ENCODE measurements at regions of chr17 and their contacts with region 1.

Region 1: DNA sequence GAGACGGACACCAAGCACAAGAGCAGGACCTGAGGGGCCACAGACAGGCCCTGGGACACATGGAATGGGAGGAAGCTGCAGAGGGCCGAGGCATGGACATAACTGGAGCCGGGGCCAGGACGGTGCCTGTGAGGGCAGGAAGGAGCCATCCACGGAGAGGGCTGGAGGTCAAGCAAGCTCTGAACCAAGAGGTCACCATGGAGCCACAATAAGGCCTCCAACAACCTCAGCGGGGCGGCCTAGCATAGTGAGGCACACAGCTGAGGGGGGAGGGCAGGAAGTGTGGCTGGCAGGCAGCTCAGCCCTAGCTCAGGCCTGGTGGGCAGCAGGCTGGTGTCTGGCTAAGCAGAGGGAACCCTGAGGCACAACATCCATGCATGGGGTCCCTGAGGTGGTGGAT is 4.4 kb downstream of the MCRIP1 start:
- DNase-seq: no peak
- H3K4me3 ChIP-seq: no peak overlapping the region
- H3K27ac ChIP-seq: no peak overlapping the region
- H3K4me1 ChIP-seq: peaks cover 9% of the 10 kb centered on the region
- H3K27me3 ChIP-seq: no peaks in the 10 kb centered on the region
- CTCF ChIP-seq: no peak

Region 2: GRCh38 chr17:81738616-81739393 is 89.9 kb before region 1 on chr17:
- CTCF ChIA-PET with region 1: no interaction called
- POLR2A ChIA-PET with region 1: interaction called, 12 read pairs
- intact Hi-C with region 1: no loop called
- DNase-seq: no peak
- H3K4me3 ChIP-seq: no peak overlapping the region
- H3K27ac ChIP-seq: no peak overlapping the region
- H3K4me1 ChIP-seq: peaks cover 6% of the 10 kb centered on the region
- H3K27me3 ChIP-seq: no peaks in the 10 kb centered on the region
- CTCF ChIP-seq: no peak

Region 3: DNA sequence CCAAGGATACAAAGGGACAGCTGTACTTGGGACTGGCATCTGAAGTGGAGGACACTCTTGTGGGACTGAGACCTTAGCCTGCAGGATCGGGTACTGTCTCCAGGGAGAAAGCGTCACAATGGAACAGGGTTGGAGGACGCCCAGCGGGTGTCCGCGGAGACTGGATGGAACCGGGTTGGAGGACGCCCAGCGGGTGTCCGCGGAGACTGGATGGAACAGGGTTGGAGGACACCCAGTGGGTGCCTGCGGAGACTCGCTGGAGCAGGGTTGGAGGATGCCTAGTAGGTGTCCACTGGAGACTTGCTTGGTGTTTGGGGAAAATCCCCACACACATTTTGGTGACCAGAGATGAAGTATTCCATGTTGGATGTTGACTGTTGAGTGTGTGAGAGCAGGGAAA is 118.5 kb after region 1 on chr17 and contains the start of gene MYADML2:
- CTCF ChIA-PET with region 1: no interaction called
- POLR2A ChIA-PET with region 1: no interaction called
- intact Hi-C with region 1: no loop called
- DNase-seq: no peak
- H3K4me3 ChIP-seq: no peak within 1 kb of the TSS
- H3K27ac ChIP-seq: no peak within 1 kb of the TSS
- H3K4me1 ChIP-seq: no peaks in the 10 kb centered on the region
- H3K27me3 ChIP-seq: no peaks in the 10 kb centered on the region
- CTCF ChIP-seq: no peak
- total RNA-seq, gene MYADML2: not detected in 2 replicates

Measured in A673 (cell line).